Activated CD4-positive, alpha-beta T cell treated with anti-CD3 and anti-CD28 coated beads, Interleukin-2, amount 10 ng/mL, durations not matched to agents 24 days and 14 days (primary cell): ENCODE measurements at regions of chr22 and their contacts with region 1.

Region 1: GRCh38 chr22:46674367-46674781 is 54.2 kb downstream of the GRAMD4 start:
- DNase-seq: peak; percentile 96
- H3K4me3 Mint-ChIP-seq: peak overlapping the region; percentile 91
- H3K27ac Mint-ChIP-seq: peak overlapping the region; percentile 95
- H3K4me1 Mint-ChIP-seq: peaks cover 30% of the 10 kb centered on the region
- H3K27me3 Mint-ChIP-seq: no peaks in the 10 kb centered on the region

Region 2: GRCh38 chr22:46320166-46320710 is 354.1 kb before region 1 on chr22:
- intact Hi-C with region 1: no loop called
- DNase-seq: no peak
- H3K4me3 Mint-ChIP-seq: no peak overlapping the region
- H3K27ac Mint-ChIP-seq: no peak overlapping the region
- H3K4me1 Mint-ChIP-seq: no peaks in the 10 kb centered on the region
- H3K27me3 Mint-ChIP-seq: no peaks in the 10 kb centered on the region

Region 3: DNA sequence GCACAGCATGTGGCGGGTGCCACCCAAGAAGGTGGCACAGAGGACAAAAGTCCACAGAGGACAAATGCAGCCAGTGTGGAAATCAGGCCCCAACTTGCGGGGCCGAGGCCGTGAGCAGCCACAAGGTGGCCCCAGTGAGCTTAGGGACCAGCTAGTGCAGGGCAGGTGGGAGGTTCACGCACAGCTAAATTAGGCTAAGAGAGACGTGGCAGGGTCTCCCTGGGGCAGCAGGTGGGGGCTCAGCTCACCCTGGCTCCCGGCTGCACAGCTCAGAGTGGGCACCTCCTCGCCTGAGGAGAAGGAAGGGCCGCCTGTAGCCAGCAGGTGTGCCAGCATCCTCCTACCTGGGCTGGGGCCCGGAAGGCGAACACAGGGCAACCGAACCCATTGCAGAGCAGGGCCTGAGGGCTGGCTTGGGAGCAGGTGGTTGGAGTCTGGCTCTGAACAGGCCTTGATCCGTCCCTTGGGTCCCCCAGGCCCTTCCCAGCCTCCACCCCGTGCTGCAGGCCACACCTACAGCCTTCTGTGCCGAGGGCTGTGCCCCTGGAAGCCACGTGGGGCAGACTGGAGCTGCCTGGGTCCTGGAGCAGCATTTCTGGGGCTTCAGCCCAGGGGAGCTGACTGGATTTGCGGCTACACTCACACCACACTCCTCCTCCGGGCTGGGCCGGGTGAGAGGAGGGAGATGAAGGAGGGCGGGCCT is 110.8 kb before region 1 on chr22:
- intact Hi-C with region 1: loop called (anchors 1 kb)
- DNase-seq: peak; percentile 94
- H3K4me3 Mint-ChIP-seq: peak overlapping the region; percentile 15
- H3K27ac Mint-ChIP-seq: peak overlapping the region; percentile 73
- H3K4me1 Mint-ChIP-seq: peaks cover 11% of the 10 kb centered on the region
- H3K27me3 Mint-ChIP-seq: peaks cover 2% of the 10 kb centered on the region

Region 4: GRCh38 chr22:46592390-46592872 is 81.9 kb before region 1 on chr22:
- intact Hi-C with region 1: loop called (anchors 1 kb)
- DNase-seq: peak; percentile 88
- H3K4me3 Mint-ChIP-seq: peak overlapping the region; percentile 77
- H3K27ac Mint-ChIP-seq: peak overlapping the region; percentile 88
- H3K4me1 Mint-ChIP-seq: peaks cover 33% of the 10 kb centered on the region
- H3K27me3 Mint-ChIP-seq: no peaks in the 10 kb centered on the region

Region 5: DNA sequence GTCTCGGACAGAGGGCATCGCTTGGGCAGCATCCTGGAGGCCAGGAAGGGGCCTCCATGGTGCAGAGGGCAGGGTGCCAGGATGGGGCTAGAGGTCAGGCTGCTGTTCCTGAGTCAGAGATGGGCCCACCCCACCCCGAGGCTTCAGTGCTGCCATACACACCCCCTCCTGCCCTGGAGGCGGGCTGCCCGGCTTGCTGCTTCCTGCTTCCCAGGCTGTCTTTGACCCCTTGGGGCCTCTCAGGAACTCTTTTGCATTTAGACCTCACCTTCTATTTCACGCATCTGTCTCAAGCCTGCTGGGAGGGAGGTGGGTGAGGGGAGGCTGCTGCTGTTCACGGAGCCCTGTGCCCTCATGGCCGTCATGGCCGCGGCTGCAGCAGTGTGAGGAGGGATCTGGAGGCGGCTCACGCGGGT is 60.8 kb before region 1 on chr22:
- intact Hi-C with region 1: loop called (anchors 1 kb)
- DNase-seq: peak; percentile 66
- H3K4me3 Mint-ChIP-seq: peak overlapping the region; percentile 85
- H3K27ac Mint-ChIP-seq: peak overlapping the region; percentile 93
- H3K4me1 Mint-ChIP-seq: peaks cover 35% of the 10 kb centered on the region
- H3K27me3 Mint-ChIP-seq: no peaks in the 10 kb centered on the region

Region 6: DNA sequence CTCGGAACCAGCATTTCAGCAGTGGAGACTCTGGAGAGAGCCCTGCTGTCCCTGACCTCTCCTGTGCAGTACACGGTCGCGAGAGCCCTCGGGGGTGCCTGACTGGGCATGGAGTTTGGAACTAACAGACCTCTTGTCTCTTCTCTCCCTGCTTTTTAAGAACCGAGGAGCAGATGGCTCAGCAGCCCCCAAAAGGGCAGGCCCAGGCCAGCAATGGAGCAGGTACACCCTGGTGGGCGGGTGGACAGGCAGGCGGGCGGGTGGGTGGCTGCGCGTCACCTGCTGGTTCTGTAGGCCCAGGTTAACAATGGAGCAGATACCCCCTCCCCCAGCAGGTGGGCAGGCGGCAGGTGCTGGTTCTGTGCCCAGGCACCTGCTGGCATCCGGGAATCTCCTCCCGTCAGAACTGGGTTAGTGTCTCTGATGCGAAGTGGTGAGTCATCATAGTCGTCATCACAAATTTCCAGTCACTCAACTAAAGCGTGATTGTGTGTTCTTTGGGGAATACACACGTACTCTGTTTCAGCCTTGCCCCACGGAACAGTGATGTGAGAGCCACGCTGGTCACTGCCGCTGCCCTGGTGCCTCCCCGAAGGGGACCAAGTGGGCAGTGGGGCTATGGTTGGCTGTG is 13.0 kb before region 1 on chr22:
- intact Hi-C with region 1: loop called (anchors 2 kb)
- DNase-seq: peak; percentile 73
- H3K4me3 Mint-ChIP-seq: peak overlapping the region; percentile 21
- H3K27ac Mint-ChIP-seq: peak overlapping the region; percentile 85
- H3K4me1 Mint-ChIP-seq: peaks cover 20% of the 10 kb centered on the region
- H3K27me3 Mint-ChIP-seq: no peaks in the 10 kb centered on the region